ENCODE measurements at regions of chr6 and their contacts with region 1.

Region 1: DNA sequence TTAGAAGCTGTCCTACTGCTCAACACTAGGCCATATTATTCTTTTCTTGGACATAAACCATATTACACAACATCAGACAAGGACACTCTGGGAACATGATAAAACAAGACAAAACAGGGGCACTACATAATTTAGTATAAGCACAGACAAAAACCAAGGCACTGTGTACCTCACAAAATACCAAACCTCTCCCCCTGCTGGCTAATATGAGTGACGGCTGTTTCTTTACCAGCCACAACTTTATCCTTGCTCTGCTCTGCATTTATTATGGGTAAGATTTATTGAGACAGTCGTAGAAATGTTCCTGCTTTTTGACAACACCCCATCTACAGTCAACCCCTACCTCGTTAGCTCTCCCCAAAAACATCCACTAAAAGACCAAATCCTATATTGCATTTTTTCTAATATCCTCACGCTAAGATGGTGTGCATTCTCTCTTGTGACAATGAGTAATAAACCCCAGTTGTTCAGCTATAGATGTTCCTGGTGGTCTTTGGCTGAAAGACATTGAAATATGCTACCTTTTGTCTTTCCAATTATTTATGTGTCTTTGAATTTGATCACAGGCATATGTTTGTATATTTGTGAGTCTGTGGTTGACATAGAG is 23.8 kb upstream of the POLR1H start:
- DNase-seq: peak; percentile 45
- H3K4me3 Mint-ChIP-seq: no peak overlapping the region
- H3K27ac Mint-ChIP-seq: no peak overlapping the region
- H3K4me1 Mint-ChIP-seq: peaks cover 23% of the 10 kb centered on the region
- H3K27me3 Mint-ChIP-seq: no peaks in the 10 kb centered on the region
- CTCF ChIP-seq: peak; percentile 52

Region 2: GRCh38 chr6:29892696-29893095 is 144.6 kb before region 1 on chr6:
- CTCF ChIA-PET with region 1: no interaction called
- POLR2A ChIA-PET with region 1: no interaction called
- intact Hi-C with region 1: no loop called
- DNase-seq: no peak
- H3K4me3 Mint-ChIP-seq: no peak overlapping the region
- H3K27ac Mint-ChIP-seq: no peak overlapping the region
- H3K4me1 Mint-ChIP-seq: no peaks in the 10 kb centered on the region
- H3K27me3 Mint-ChIP-seq: no peaks in the 10 kb centered on the region
- CTCF ChIP-seq: no peak

Region 3: GRCh38 chr6:30025186-30025585 is 12.1 kb before region 1 on chr6:
- CTCF ChIA-PET with region 1: interaction called, 11 read pairs
- POLR2A ChIA-PET with region 1: interaction called, 3 read pairs
- intact Hi-C with region 1: no loop called
- DNase-seq: no peak
- H3K4me3 Mint-ChIP-seq: no peak overlapping the region
- H3K27ac Mint-ChIP-seq: no peak overlapping the region
- H3K4me1 Mint-ChIP-seq: no peaks in the 10 kb centered on the region
- H3K27me3 Mint-ChIP-seq: no peaks in the 10 kb centered on the region
- CTCF ChIP-seq: no peak

Region 4: GRCh38 chr6:30097893-30098768 is 60.8 kb after region 1 on chr6:
- CTCF ChIA-PET with region 1: no interaction called
- POLR2A ChIA-PET with region 1: no interaction called
- intact Hi-C with region 1: no loop called
- DNase-seq: no peak
- H3K4me3 Mint-ChIP-seq: no peak overlapping the region
- H3K27ac Mint-ChIP-seq: no peak overlapping the region
- H3K4me1 Mint-ChIP-seq: peaks cover 39% of the 10 kb centered on the region
- H3K27me3 Mint-ChIP-seq: peaks cover 18% of the 10 kb centered on the region
- CTCF ChIP-seq: no peak

Measured in MCF 10A (cell line).